ENCODE measurements at regions of chr10 and their contacts with region 1.

Region 1: DNA sequence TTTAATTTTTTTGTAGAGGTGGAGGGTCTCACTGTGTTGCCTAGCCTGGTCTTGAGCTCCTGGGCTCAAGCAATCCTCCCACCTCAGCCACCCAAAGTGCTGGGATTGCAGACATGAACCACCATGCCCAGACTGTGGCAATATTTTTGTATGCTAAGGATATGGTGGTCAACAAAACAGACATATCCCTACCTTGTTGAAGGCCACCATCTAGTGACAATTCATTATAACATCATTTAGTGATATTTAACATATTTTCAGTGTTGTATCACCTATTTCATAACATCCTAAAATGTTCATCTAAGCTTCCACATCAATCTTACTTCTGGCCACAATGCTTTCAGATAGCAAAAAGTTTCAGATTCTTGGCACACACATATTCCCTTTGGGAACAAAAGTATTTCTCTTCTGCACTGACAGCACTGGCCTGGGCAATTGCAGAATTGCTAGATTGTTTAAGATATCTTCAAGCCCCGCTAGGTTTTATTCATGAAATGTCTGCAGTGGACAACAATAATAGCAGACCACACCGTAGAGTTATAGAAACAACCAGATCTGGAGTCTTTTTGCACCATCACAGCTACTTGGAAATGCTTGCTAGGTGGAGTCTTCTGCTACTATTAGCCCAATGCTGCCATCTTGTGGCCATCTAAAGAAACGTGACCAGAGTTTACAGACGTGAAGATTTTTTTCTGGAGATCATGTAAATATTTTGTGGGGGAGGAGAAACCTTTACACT is 58.4 kb downstream of the DNAJC12 start:
- DNase-seq: peak; percentile 34 to 91
- ATAC-seq: peak; percentile 76 to 89 (median 82)
- H3K4me3 ChIP-seq: no peak overlapping the region
- H3K4me3 Mint-ChIP-seq: no peak overlapping the region
- H3K27ac ChIP-seq: no peak overlapping the region
- H3K27ac Mint-ChIP-seq: no peak overlapping the region
- H3K4me1 ChIP-seq: peaks cover 5% of the 10 kb centered on the region
- H3K4me1 Mint-ChIP-seq: peaks cover 0 to 9% of the 10 kb centered on the region in 2 donors
- H3K27me3 ChIP-seq: no peaks in the 10 kb centered on the region
- H3K27me3 Mint-ChIP-seq: no peaks in the 10 kb centered on the region
- CTCF ChIP-seq: peak; percentile 95

Region 2: GRCh38 chr10:67697724-67698131 is 81.9 kb before region 1 on chr10:
- intact Hi-C with region 1: loop called (anchors 1 kb)
- DNase-seq: peak in 1 of 2 donors; percentile 75
- ATAC-seq: peak in 2 of 3 donors; percentile 59 to 67
- H3K4me3 ChIP-seq: no peak overlapping the region
- H3K4me3 Mint-ChIP-seq: no peak overlapping the region
- H3K27ac ChIP-seq: no peak overlapping the region
- H3K27ac Mint-ChIP-seq: no peak overlapping the region
- H3K4me1 ChIP-seq: no peaks in the 10 kb centered on the region
- H3K4me1 Mint-ChIP-seq: no peaks in the 10 kb centered on the region
- H3K27me3 ChIP-seq: no peaks in the 10 kb centered on the region
- H3K27me3 Mint-ChIP-seq: peaks cover 25 to 31% of the 10 kb centered on the region in 2 donors
- CTCF ChIP-seq: peak; percentile 63